ENCODE measurements at regions of chr2 and their contacts with region 1.

Region 1: DNA sequence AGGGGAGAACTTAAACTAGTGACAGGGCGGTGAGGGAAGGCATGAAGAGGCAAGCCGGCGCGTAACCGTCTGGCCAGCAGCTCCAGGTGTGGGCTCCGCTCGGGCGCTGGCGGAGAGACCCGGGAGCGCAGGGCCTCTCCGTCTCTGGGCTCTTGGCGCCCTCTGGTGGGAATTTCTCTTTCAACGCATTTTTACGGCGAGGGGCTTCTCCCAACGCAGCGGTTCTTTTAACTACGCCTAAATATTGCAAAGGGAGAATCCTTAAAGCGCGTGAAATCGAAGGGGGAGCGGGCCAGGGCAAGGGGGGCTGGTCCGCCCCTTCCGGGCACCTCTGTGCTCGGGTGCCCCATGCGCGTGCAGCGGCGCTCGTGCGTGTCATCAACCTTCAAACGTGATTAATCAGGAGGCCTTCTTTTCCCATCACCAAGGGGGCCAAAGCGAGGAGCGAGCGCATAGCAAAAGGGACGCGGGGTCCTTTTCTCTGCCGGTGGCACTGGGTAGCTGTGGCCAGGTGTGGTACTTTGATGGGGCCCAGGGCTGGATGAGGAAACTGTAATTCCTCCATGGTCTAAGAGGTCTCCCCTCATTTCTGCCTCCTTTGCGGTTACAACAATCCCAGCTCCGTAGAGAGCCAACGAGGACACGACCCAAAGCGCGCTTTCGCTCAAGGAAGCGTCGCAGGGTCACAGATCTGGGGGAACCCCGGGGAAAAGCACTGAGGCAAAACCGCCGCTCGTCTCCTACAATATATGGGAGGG is 762 bp upstream of the GAD1 start:
- DNase-seq: peak; percentile 50
- H3K4me3 ChIP-seq: no peak overlapping the region
- H3K27ac ChIP-seq: no peak overlapping the region
- H3K4me1 ChIP-seq: no peaks in the 10 kb centered on the region
- CTCF ChIP-seq: peak; percentile 81

Region 2: GRCh38 chr2:169933124-169933711 is 882.7 kb before region 1 on chr2:
- CTCF ChIA-PET with region 1: no interaction called
- POLR2A ChIA-PET with region 1: no interaction called
- intact Hi-C with region 1: loop called (anchors 10 kb)
- DNase-seq: peak; percentile 33
- H3K4me3 ChIP-seq: no peak overlapping the region
- H3K27ac ChIP-seq: no peak overlapping the region
- H3K4me1 ChIP-seq: no peaks in the 10 kb centered on the region
- CTCF ChIP-seq: peak; percentile 79

Region 3: DNA sequence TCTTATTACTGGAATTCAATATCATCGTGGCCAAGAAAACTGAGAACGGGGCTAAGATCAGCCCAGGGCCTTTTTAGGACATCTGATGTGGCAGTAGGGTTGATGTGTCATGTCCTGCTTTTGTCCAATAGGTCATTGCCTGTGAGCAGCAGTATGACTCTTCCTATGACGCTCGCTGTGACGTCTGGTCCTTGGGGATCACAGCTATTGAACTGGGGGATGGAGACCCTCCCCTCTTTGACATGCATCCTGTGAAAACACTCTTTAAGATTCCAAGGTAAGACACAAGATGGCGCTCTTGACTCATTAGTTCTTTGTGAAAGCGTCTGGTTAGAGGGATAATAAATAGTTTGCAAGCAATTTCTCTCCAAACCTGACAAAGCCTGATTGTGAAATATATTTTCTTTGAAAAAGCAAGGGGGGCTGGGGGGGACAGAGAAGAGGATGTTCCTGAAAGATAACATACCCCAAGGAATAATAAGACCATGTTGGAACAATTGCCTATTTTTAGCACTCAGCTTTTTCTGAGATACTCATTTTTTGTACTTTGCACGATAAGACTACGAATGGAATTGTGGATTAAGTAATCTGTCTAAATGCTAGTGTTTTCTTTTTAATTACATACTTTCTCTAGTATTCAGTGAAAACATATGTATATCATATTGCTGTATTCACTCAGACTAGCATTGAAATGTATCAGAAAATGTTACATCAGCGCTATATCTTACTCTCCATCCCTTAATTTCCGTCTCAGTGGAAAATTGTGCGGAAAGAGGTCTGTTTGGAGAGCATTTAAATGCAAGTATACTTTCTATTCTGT is 579.9 kb before region 1 on chr2:
- CTCF ChIA-PET with region 1: no interaction called
- POLR2A ChIA-PET with region 1: no interaction called
- intact Hi-C with region 1: loop called (anchors 5 kb)
- DNase-seq: peak; percentile 46
- H3K4me3 ChIP-seq: no peak overlapping the region
- H3K27ac ChIP-seq: no peak overlapping the region
- H3K4me1 ChIP-seq: no peaks in the 10 kb centered on the region
- CTCF ChIP-seq: peak; percentile 80

Region 4: GRCh38 chr2:170324640-170325046 is 491.3 kb before region 1 on chr2:
- CTCF ChIA-PET with region 1: no interaction called
- POLR2A ChIA-PET with region 1: no interaction called
- intact Hi-C with region 1: loop called (anchors 1 kb)
- DNase-seq: peak; percentile 73
- H3K4me3 ChIP-seq: no peak overlapping the region
- H3K27ac ChIP-seq: no peak overlapping the region
- H3K4me1 ChIP-seq: no peaks in the 10 kb centered on the region
- CTCF ChIP-seq: peak; percentile 90

Region 5: GRCh38 chr2:170369894-170370293 is 446.0 kb before region 1 on chr2:
- CTCF ChIA-PET with region 1: no interaction called
- POLR2A ChIA-PET with region 1: no interaction called
- intact Hi-C with region 1: loop called (anchors 2 kb)
- DNase-seq: peak; percentile 30
- H3K4me3 ChIP-seq: no peak overlapping the region
- H3K27ac ChIP-seq: no peak overlapping the region
- H3K4me1 ChIP-seq: no peaks in the 10 kb centered on the region
- CTCF ChIP-seq: peak; percentile 76

Region 6: GRCh38 chr2:170409164-170409535 is 406.8 kb before region 1 on chr2:
- CTCF ChIA-PET with region 1: no interaction called
- POLR2A ChIA-PET with region 1: no interaction called
- intact Hi-C with region 1: loop called (anchors 10 kb)
- DNase-seq: peak; percentile 82
- H3K4me3 ChIP-seq: peak overlapping the region; percentile 27
- H3K27ac ChIP-seq: no peak overlapping the region
- H3K4me1 ChIP-seq: peaks cover 16% of the 10 kb centered on the region
- CTCF ChIP-seq: peak; percentile 99

Region 7: DNA sequence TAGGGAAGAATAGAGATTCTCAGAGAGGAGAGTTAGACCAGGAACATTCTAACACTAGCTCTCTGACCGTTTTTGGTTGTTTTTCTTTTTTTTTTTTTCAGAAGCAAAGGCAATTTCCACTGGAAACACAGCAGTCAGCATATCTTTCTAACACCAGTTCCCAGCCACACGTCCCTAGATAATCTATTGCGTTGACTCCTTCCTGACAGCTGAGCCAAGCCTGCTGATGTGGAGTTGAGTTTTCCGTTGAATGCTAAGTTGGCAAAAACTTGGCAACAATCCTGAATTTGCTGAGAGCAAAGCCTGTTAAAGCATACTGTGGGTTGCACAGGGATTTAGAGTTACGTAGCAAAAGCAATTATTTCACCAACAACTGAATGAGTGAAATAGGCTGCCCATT is 20.1 kb after region 1 on chr2:
- CTCF ChIA-PET with region 1: no interaction called
- POLR2A ChIA-PET with region 1: no interaction called
- intact Hi-C with region 1: no loop called
- DNase-seq: no peak
- H3K4me3 ChIP-seq: no peak overlapping the region
- H3K27ac ChIP-seq: no peak overlapping the region
- H3K4me1 ChIP-seq: no peaks in the 10 kb centered on the region
- CTCF ChIP-seq: no peak